Activated naive CD4-positive, alpha-beta T cell treated with anti-CD3 and anti-CD28 coated beads for 36 hours (primary cell): ENCODE measurements at regions of chr3 and their contacts with region 1.

Region 1: GRCh38 chr3:76107935-76108570 is 322.7 kb upstream of the ZNF717 start:
- DNase-seq: no peak
- H3K4me3 Mint-ChIP-seq: no peak overlapping the region
- H3K27ac Mint-ChIP-seq: no peak overlapping the region
- H3K4me1 Mint-ChIP-seq: no peaks in the 10 kb centered on the region
- H3K27me3 Mint-ChIP-seq: no peaks in the 10 kb centered on the region

Region 2: GRCh38 chr3:75610773-75611172 is 497.3 kb before region 1 on chr3:
- CTCF ChIA-PET with region 1: no interaction called
- intact Hi-C with region 1: loop called (anchors 2 kb)
- DNase-seq: no peak
- H3K4me3 Mint-ChIP-seq: no peak overlapping the region
- H3K27ac Mint-ChIP-seq: no peak overlapping the region
- H3K4me1 Mint-ChIP-seq: no peaks in the 10 kb centered on the region
- H3K27me3 Mint-ChIP-seq: peaks cover 2% of the 10 kb centered on the region

Region 3: GRCh38 chr3:75727985-75728384 is 380.1 kb before region 1 on chr3:
- CTCF ChIA-PET with region 1: no interaction called
- intact Hi-C with region 1: loop called (anchors 10 kb)
- DNase-seq: no peak
- H3K4me3 Mint-ChIP-seq: no peak overlapping the region
- H3K27ac Mint-ChIP-seq: no peak overlapping the region
- H3K4me1 Mint-ChIP-seq: no peaks in the 10 kb centered on the region
- H3K27me3 Mint-ChIP-seq: no peaks in the 10 kb centered on the region

Region 4: DNA sequence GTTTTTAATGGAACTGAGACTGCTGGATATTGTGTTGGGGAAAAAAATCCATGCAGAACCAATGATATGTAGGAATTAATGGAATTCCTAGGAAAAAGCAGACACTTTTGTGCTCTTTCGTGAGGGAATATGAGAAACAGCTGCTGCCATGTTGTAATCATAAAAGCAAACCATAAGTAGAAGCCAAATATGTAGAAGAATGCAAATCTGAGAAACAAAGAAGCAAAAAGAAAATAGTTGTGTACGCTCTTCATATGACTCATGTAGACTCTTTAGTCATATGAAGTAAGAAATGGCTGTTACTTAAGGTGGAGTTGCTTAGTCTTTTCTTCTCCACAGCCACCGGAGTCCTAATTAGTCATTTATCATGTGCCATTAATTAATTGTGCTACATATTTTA is 24.1 kb before region 1 on chr3:
- CTCF ChIA-PET with region 1: no interaction called
- intact Hi-C with region 1: no loop called
- DNase-seq: no peak
- H3K4me3 Mint-ChIP-seq: no peak overlapping the region
- H3K27ac Mint-ChIP-seq: no peak overlapping the region
- H3K4me1 Mint-ChIP-seq: no peaks in the 10 kb centered on the region
- H3K27me3 Mint-ChIP-seq: no peaks in the 10 kb centered on the region